Left cardiac atrium (tissue), 4 donors: ENCODE measurements at regions of chr14 and their contacts with region 1.

Region 1: DNA sequence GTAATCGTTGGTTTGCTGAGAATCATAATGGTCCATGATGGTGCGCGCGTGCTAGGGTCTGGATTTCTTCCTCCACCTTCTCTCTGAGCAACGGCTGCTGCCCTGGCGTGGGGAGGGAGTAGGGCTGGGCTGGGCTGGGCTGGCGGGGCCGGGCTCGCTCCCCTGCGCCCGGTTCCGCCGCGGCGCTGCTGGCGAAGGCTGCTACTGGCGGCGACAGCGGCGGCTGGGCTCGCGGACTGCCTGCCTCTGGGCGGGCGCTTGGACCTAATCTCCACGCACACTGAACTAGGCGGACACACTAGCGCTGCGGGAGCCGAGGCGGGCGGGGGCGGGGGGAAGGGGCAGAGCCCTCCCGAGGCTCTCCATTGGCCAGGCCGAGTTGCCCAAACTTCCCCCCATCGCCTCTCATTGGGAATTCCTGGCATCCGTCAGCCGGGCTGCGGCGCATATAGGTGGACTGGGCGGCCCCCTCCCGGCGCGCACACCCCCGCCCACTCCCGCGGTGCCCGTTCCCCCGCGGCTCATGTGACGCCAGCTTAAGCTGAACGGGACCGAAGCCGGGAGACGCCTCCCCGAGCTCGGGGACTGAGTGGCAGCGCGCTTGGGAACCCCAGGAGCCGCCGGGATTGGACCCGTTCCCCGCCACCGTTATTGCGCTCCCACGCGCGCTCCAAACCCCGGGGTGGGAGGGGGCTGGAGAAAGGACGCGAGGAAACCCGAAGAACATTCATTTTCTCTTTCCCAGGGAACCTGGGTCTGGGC is at the start of gene ACTN1:
- DNase-seq: peak; percentile 96
- ATAC-seq: peak; percentile 83
- total RNA-seq, gene ACTN1: 160 to 319 TPM

Region 2: GRCh38 chr14:68939893-68940613 is 39.1 kb before region 1 on chr14:
- intact Hi-C with region 1: loop called in 1 of 2 experiments (anchors 5 kb)
- DNase-seq: peak; percentile 90
- ATAC-seq: peak; percentile 70 to 84

Region 3: DNA sequence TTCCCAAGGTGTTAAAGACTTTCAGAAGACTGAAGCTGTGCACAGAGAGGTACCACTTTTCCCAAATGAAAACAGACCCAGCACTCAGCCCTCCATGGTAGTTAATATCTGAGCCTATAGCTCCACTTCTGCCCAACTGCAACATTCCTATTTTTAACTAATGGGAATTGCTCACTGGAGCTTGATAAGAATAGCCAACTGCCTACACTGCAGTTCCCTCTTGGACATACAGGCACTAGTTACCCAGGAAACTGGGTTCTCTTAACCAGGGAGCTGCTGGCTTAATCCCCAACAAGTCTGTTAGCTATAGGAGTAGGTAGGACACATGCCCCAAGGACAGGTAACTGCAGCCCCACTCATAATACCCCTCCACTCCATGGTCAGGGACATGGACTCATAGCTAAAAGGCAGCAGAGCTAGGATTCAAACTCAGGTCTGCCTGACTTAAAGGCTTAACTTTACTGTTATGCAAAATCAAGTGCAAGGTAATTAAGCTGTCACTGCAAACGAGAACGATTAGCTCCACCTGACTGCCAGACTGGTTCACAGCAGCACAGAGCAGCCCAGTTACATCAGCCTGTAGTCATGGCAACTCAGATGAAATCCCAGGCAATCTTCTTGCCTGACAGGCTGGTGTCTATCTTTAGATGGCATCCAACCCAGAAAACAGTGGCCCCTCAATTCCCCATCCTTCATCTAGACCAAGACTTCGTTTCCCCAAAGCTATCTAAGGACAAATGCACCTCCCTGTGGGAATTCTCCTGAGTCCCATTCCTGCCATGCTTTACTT is 77.0 kb after region 1 on chr14:
- intact Hi-C with region 1: loop called in 1 of 2 experiments (anchors 5 kb)
- DNase-seq: no peak
- ATAC-seq: peak in 1 of 2 donors; percentile 18